HCT116 (cell line): ENCODE measurements at regions of chr6 and their contacts with region 1.

Region 1: DNA sequence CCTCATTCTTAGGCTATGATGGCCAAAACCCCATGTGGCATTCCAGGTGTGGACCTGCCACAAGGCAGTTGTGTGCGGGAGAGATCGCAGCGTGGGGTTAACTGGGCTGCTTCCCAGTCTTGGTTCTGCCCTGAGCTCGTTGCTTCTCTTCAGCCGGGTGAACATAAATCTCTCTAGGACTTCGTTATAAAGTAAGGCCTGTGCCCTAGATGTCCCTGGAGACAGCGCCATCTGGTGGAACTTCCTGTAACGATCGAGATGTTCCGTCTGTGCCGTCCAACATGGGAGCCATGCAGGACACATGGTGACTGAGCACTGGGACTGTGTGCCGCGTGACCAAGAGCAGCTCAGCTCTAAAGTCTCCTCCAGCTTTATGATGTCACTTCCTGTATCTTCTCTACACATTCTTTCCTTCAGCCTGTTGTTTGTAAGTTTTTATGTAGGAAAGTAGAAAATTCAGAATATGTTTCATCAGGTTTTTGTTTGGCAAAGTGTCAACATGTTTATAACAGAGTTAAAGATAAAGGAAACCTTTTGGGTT is 26.8 kb upstream of the RPP40 start:
- DNase-seq: peak; percentile 83
- ATAC-seq: peak; percentile 89
- H3K4me3 ChIP-seq: no peak overlapping the region
- H3K27ac ChIP-seq: no peak overlapping the region
- H3K4me1 ChIP-seq: peaks cover 6 to 33% of the 10 kb centered on the region in 2 experiments; a peak in 3 of 4 replicates
- H3K27me3 ChIP-seq: no peaks in the 10 kb centered on the region
- CTCF ChIP-seq: peak; percentile 54 to 86 (median 74); a peak in 5 of 6 replicates
- POLR2A ChIP-seq: peak; percentile 27
- RAD21 ChIP-seq: peak; percentile 83

Region 2: DNA sequence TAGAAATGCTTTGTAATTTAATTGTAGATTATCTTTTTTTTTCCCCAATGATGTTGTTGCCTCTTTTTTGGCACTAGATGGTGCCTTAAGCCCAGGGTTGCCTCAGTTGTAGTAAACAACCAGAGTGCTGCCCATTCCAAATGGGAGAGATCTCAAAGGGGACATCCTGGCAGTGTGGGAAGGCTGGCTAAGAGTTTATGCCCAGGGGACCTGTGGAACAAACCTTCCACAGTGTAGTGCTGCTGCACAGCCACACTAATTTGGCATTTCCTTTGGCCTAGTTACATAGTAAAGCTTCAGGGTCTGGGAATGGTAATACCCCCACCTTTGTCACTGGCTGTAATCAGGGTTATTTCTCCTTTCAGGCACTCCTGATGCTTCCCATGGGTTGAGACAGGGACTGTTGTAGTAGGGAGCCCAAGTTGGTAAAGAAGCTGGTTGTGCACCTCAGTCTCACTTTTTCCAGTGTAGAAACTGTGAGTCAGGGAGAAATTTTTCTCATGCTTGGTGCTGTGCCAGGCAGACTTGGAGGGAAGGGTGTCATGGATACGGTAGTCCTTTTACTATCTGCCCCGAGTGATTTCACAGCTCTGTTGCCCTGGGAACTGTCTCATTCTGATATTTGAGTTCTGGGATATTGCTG is 717.5 kb before region 1 on chr6:
- CTCF ChIA-PET with region 1: interaction called, 9 read pairs
- POLR2A ChIA-PET with region 1: no interaction called
- RAD21 ChIA-PET with region 1: no interaction called
- intact Hi-C with region 1: loop called (anchors 1 kb)
- DNase-seq: peak; percentile 49
- ATAC-seq: peak; percentile 90
- H3K4me3 ChIP-seq: peak overlapping the region in 1 of 2 experiments; percentile 14; a peak in 1 of 4 replicates
- H3K27ac ChIP-seq: no peak overlapping the region
- H3K4me1 ChIP-seq: peaks cover 2 to 17% of the 10 kb centered on the region in 2 experiments; a peak in 3 of 4 replicates
- H3K27me3 ChIP-seq: no peaks in the 10 kb centered on the region
- CTCF ChIP-seq: peak; percentile 47 to 80 (median 63); a peak in 5 of 6 replicates
- POLR2A ChIP-seq: no peak
- RAD21 ChIP-seq: peak; percentile 97

Region 3: GRCh38 chr6:5003604-5004372 is 26.9 kb before region 1 on chr6 and contains the start of gene RPP40:
- CTCF ChIA-PET with region 1: interaction called, 10 read pairs
- POLR2A ChIA-PET with region 1: interaction called, 3 read pairs
- RAD21 ChIA-PET with region 1: no interaction called
- intact Hi-C with region 1: no loop called
- DNase-seq: peak; percentile 89
- ATAC-seq: peak; percentile 95
- H3K4me3 ChIP-seq: peak within 1 kb of the TSS; percentile 74 to 87
- H3K27ac ChIP-seq: peak within 1 kb of the TSS; percentile 68
- H3K4me1 ChIP-seq: peaks cover 0 to 17% of the 10 kb centered on the region in 2 experiments; a peak in 2 of 4 replicates
- H3K27me3 ChIP-seq: no peaks in the 10 kb centered on the region
- CTCF ChIP-seq: peak; percentile 52 to 85 (median 79); a peak in 5 of 6 replicates
- POLR2A ChIP-seq: no peak
- RAD21 ChIP-seq: peak; percentile 24; the same call in 1 of the 2 replicates
- total RNA-seq, gene RPP40: 15.9 TPM